ENCODE measurements at regions of chr10 and their contacts with region 1.

Region 1: DNA sequence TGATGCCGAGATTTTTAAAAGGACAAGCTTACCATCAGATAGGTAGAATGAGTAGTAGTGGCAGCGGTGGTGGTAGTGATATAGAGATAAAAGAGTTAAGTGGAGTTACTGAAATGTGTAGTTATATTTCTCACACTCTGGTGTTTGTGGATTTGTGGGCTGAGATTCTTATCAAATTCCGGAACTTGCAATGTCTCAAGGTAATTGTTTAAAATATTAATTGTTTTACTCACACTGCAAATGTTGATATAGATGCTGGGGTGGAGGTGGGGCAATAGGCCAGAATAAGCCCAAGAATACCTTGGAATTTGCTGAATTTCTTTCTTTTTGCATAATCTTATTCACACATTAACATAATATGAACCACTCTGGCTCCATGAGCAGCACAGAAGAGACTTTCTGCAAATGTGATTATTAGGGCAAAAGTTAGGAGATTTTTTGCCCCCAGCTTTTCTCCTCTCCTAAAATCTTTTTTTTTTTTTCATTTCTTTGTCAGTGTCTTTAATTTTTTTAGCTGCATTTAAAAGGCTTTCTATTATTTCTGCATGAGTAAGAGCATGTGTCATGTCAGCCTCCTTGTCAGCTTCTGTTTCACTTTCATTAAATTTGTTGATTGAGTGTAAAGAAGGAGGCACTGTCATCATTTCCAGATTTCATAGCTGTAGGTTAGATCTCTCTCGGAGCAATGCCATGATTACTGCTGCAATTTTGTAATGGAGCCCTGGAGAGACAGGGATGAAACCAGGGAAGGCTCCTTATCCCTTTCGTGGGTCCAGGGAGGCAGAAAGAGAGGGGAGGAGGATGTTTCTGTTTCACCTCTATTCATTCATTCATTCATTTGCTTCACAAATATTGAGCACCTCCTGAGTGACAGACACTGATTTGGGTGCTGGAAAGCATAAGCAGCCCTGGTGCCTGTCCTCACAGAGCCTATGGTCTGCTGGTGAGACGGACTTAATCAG is 13.1 kb upstream of the SGMS1 start:
- DNase-seq: no peak
- ATAC-seq: peak; percentile 63
- H3K4me3 ChIP-seq: no peak overlapping the region
- H3K27ac ChIP-seq: no peak overlapping the region
- H3K4me1 ChIP-seq: peaks cover 5% of the 10 kb centered on the region; the same call in 1 of the 2 replicates
- H3K27me3 ChIP-seq: no peaks in the 10 kb centered on the region
- CTCF ChIP-seq: no peak

Region 2: GRCh38 chr10:50592961-50593418 is 43.9 kb before region 1 on chr10:
- CTCF ChIA-PET with region 1: no interaction called
- POLR2A ChIA-PET with region 1: interaction called, 14 read pairs
- intact Hi-C with region 1: no loop called
- DNase-seq: no peak
- ATAC-seq: peak; percentile 18; the same call in 1 of the 2 replicates
- H3K4me3 ChIP-seq: no peak overlapping the region
- H3K27ac ChIP-seq: no peak overlapping the region
- H3K4me1 ChIP-seq: no peaks in the 10 kb centered on the region
- H3K27me3 ChIP-seq: no peaks in the 10 kb centered on the region
- CTCF ChIP-seq: no peak

Measured in PC-3 (cell line).